HepG2 (cell line): ENCODE measurements at regions of chr22 and their contacts with region 1.

Region 1: GRCh38 chr22:18152519-18152918 is 2.5 kb downstream of the USP18 start:
- DNase-seq: no peak
- ATAC-seq: no peak
- H3K4me3 ChIP-seq: no peak overlapping the region
- H3K27ac ChIP-seq: no peak overlapping the region
- H3K4me1 ChIP-seq: peaks cover 33% of the 10 kb centered on the region
- H3K27me3 ChIP-seq: no peaks in the 10 kb centered on the region
- CTCF ChIP-seq: no peak
- EP300 ChIP-seq: no peak
- POLR2A ChIP-seq: no peak
- RAD21 ChIP-seq: no peak

Region 2: DNA sequence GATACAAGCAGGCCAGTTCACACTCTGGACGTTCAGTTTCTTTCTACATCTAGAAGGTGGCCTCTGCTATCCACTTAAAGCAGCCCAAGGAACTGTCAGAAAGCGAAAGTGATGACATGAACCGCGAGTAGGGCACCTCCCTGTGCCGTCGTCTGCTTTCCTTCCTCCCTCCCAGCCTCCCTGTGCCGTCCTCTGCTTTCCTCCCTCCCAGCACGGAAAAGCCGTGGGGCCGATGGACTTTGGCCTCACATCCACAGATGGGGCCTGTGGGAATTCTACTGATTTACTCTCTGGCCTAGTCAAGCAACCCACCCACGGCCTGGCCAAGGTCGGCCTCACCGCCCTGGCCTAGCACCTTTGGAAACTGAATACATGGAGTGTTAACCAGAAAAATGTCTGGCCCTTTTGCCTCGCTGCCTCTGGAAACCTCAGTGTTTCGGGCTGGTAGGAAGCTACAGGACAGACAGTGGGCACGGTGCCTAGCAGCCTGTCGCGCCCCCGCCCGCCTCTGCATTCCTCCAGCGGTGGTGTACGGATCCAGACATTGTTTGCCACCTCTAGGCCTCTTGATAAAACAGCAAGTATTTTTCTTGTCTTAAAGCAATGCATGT is 60.5 kb before region 1 on chr22:
- CTCF ChIA-PET with region 1: no interaction called
- POLR2A ChIA-PET with region 1: interaction called, 10 read pairs
- in situ Hi-C with region 1: no loop called
- intact Hi-C with region 1: no loop called
- DNase-seq: peak; percentile 76
- ATAC-seq: peak; percentile 90
- H3K4me3 ChIP-seq: peak overlapping the region; percentile 44 to 65 (median 56)
- H3K27ac ChIP-seq: peak overlapping the region; percentile 92
- H3K4me1 ChIP-seq: peaks cover 36% of the 10 kb centered on the region
- H3K27me3 ChIP-seq: no peaks in the 10 kb centered on the region
- CTCF ChIP-seq: peak; percentile 43
- EP300 ChIP-seq: peak in 1 of 2 experiments; percentile 43; a peak in 1 of 4 replicates
- POLR2A ChIP-seq: peak in 1 of 2 experiments; percentile 66; a peak in 2 of 4 replicates
- RAD21 ChIP-seq: 0 out of 2 replicates have a peak, but pooled peaks have one; percentile 22